ENCODE measurements at regions of chr6 and their contacts with region 1.

Region 1: GRCh38 chr6:14130435-14131075 is 13.0 kb downstream of the CD83 start:
- DNase-seq: peak in 1 of 2 donors; percentile 10
- H3K4me3 ChIP-seq: no peak overlapping the region
- H3K27ac ChIP-seq: no peak overlapping the region
- H3K4me1 ChIP-seq: peaks cover 10 to 16% of the 10 kb centered on the region in 2 donors
- H3K27me3 ChIP-seq: no peaks in the 10 kb centered on the region
- CTCF ChIP-seq: no peak
- POLR2A ChIP-seq: no peak

Region 2: DNA sequence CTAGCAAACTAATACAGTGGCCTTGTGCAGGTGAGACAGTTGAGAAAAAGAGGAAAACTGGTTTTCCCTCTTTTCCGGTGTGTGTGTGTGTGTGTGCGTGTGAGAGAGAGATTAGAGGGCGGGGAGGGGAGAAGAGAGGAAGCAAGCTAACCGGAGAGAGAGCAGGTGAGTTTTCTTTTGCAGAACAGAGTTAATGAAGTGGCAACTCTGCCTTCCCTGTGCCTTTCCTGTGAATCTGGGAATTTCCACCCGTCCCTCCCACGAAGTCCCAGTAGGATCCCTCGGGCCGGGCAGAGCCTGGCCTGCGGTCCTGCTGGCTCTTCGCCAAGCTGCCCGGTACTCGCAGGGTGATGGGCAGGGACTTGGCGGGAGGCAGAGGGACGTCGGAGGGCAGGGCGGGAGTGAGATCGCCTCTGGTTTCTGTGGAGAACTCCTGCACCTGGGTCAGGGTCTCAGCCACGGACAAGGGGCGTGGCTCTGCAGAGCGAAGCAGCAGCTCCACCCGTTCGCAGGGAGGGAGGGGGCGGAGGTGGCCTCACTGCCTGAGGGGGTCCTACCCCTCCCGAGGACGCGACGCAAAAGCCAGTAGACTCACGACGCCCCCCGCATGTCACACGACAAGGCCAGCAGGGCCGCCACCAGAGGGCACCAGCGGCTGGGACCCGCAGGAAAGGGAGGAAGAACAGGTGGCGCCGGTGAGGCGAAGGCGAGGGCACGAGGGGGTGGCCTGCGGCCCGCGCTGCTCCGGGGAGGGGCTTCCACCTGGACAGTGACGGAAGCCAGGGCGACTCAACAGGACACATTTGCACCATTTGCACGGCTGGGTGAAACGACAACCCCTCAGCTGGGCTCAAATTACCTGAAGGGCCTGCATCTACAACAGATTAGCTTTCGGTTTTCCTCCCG is 257.0 kb before region 1 on chr6:
- intact Hi-C with region 1: no loop called
- DNase-seq: peak; percentile 85 to 86
- H3K4me3 ChIP-seq: peak overlapping the region; percentile 6 to 42 (median 6)
- H3K27ac ChIP-seq: peak overlapping the region; percentile 47 to 76 (median 72)
- H3K4me1 ChIP-seq: peaks cover 0 to 9% of the 10 kb centered on the region in 2 donors
- H3K27me3 ChIP-seq: no peaks in the 10 kb centered on the region
- CTCF ChIP-seq: peak; percentile 65 to 84 (median 70)
- POLR2A ChIP-seq: no peak

Region 3: GRCh38 chr6:14200047-14200446 is 69.5 kb after region 1 on chr6:
- intact Hi-C with region 1: loop called (anchors 10 kb)
- DNase-seq: no peak
- H3K4me3 ChIP-seq: no peak overlapping the region
- H3K27ac ChIP-seq: no peak overlapping the region
- H3K4me1 ChIP-seq: no peaks in the 10 kb centered on the region
- H3K27me3 ChIP-seq: no peaks in the 10 kb centered on the region
- CTCF ChIP-seq: no peak
- POLR2A ChIP-seq: no peak

Measured in thyroid gland (tissue), 4 donors.